MCF 10A (cell line): ENCODE measurements at regions of chr16 and their contacts with region 1.

Region 1: DNA sequence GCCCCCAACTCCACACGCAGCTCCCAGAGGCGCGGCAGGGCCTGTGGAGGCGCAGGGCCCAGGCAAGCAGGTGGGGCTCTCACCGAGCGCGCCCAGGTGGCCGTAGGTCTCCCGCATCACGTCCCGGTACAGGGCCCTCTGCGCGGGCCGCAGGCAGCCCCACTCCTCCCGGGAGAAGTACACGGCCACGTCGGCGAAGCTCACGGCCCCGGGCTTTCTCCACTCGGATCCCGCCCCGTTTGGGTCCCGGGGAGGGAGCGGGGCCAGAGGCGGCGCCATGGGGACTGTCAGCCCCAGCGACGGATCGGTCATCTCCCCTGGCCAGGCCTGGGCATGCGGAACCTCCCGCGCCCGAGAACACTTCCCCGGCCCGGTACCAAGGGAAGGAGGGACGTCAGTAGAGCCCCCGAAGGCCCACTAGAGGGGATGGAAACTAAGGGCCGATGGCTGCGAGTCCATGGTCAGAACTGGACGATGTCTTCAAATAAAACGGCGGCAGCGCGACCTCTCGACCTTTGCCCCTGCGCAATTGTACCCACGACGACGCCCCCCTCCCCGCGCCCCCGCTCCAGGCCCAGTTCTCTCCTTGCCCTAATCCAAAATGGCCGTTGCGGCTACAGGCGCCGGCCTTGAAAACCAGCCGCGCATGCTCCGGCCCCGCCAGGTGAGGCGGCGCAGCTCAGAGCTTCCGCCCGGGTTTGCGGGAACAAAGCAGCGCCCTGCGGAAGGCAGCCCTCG is at the start of gene ZNF747:
- DNase-seq: peak; percentile 86
- H3K4me3 Mint-ChIP-seq: peak within 1 kb of the TSS; percentile 91
- H3K27ac Mint-ChIP-seq: peak within 1 kb of the TSS; percentile 95
- H3K4me1 Mint-ChIP-seq: peaks cover 6% of the 10 kb centered on the region
- H3K27me3 Mint-ChIP-seq: no peaks in the 10 kb centered on the region
- CTCF ChIP-seq: no peak
- total RNA-seq, gene ZNF747: 13.7 TPM in 2 replicates

Region 2: DNA sequence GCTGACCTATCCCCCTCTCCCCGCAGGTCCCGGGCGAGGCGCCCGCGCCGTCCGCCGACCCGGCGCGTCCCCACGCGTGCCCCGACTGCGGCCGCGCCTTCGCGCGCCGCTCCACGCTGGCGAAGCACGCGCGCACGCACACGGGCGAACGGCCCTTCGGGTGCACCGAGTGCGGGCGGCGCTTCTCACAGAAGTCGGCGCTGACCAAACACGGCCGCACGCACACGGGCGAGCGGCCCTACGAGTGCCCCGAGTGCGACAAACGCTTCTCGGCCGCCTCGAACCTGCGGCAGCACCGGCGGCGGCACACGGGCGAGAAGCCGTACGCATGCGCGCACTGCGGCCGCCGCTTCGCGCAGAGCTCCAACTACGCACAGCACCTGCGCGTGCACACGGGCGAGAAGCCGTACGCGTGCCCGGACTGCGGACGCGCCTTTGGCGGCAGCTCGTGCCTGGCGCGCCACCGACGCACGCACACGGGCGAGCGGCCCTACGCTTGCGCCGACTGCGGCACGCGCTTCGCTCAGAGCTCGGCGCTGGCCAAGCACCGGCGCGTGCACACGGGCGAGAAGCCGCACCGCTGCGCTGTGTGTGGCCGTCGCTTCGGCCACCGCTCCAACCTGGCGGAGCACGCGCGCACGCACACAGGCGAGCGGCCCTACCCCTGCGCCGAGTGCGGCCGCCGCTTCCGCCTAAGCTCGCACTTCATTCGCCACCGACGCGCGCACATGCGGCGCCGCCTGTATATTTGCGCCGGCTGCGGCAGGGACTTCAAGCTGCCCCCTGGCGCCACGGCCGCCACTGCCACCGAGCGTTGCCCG is 116.8 kb before region 1 on chr16:
- CTCF ChIA-PET with region 1: no interaction called
- POLR2A ChIA-PET with region 1: interaction called, 12 read pairs
- intact Hi-C with region 1: no loop called
- DNase-seq: peak; percentile 74
- H3K4me3 Mint-ChIP-seq: peak overlapping the region; percentile 58
- H3K27ac Mint-ChIP-seq: no peak overlapping the region
- H3K4me1 Mint-ChIP-seq: peaks cover 4% of the 10 kb centered on the region
- H3K27me3 Mint-ChIP-seq: no peaks in the 10 kb centered on the region
- CTCF ChIP-seq: no peak

Region 3: DNA sequence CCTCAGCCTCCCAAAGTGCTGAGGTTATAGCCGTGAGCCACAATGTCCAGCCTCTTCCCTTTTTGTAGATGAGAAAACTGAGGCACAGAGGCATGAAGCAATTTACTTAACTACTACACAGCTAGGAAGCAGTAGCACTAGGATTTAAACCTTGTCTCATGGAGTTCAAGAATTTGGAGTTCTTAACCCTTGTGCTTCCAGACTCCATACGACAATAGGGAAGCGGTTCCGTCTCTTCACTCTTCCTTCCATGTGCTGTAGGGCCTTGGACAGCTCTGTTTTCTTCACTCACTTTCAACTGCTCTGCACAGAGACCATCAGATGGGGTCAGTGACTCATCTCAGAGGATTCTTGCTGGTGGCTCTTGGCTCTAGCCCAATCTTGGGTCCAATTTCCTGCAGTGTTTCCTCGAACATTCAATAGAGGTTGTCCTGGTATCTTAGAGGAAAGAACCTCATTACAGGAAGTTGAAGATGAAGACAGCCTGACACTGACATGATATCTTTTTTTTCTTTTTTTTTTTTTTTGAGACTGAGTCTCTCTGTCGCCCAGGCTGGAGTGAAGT is 42.7 kb before region 1 on chr16:
- CTCF ChIA-PET with region 1: interaction called, 3 read pairs
- POLR2A ChIA-PET with region 1: interaction called, 11 read pairs
- intact Hi-C with region 1: no loop called
- DNase-seq: peak; percentile 82
- H3K4me3 Mint-ChIP-seq: no peak overlapping the region
- H3K27ac Mint-ChIP-seq: no peak overlapping the region
- H3K4me1 Mint-ChIP-seq: peaks cover 20% of the 10 kb centered on the region
- H3K27me3 Mint-ChIP-seq: no peaks in the 10 kb centered on the region
- CTCF ChIP-seq: no peak

Region 4: DNA sequence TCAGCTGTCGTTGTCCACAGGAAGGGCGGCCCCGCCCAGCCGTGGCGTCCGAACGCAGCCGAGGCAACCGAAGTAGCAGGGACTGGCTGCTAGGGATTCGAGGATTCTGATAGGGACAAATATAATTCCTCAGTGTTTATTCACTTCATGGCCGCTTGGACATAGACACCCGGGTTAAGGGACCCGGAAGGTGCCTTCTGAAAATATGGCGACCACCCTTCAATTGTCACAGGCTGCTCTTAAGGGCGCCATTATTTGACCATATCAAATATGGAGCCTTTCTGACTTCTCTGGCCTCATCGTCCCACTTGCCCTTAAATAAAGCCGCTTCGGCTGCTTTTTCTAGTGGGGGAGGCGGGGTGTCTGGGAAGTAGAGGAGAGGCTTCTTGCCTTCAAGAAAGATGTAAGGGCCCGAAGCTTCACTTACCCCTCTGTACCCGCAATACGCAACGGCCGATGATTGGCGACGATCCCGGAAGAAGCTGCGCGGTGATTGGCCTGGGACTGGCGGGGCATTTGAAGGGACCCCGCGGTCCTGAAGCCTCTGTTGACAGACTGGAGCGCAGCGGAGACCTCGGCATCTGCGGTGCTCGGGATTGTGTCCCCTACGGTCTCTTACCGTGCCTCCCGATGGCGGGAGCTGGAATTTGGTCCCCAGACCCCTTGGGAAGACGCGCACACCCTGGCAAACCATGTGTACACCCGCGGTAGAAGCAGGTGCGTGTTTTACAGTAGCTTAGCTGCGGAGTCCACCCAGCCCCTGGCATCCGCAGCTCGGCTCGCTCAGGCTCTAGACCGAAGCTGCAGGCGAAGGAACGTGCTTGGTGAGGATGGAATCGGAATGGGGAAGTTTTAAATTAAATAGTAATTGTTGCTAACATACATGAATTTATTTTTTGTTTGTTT is 37.4 kb after region 1 on chr16 and contains the start of gene ZNF688:
- CTCF ChIA-PET with region 1: interaction called, 3 read pairs
- POLR2A ChIA-PET with region 1: interaction called, 25 read pairs
- intact Hi-C with region 1: loop called (anchors 1 kb)
- DNase-seq: peak; percentile 97
- H3K4me3 Mint-ChIP-seq: peak within 1 kb of the TSS; percentile 75
- H3K27ac Mint-ChIP-seq: peak within 1 kb of the TSS; percentile 76
- H3K4me1 Mint-ChIP-seq: peaks cover 19% of the 10 kb centered on the region
- H3K27me3 Mint-ChIP-seq: no peaks in the 10 kb centered on the region
- CTCF ChIP-seq: no peak
- total RNA-seq, gene ZNF688: 9.0 and 11.6 TPM in 2 replicates

Region 5: DNA sequence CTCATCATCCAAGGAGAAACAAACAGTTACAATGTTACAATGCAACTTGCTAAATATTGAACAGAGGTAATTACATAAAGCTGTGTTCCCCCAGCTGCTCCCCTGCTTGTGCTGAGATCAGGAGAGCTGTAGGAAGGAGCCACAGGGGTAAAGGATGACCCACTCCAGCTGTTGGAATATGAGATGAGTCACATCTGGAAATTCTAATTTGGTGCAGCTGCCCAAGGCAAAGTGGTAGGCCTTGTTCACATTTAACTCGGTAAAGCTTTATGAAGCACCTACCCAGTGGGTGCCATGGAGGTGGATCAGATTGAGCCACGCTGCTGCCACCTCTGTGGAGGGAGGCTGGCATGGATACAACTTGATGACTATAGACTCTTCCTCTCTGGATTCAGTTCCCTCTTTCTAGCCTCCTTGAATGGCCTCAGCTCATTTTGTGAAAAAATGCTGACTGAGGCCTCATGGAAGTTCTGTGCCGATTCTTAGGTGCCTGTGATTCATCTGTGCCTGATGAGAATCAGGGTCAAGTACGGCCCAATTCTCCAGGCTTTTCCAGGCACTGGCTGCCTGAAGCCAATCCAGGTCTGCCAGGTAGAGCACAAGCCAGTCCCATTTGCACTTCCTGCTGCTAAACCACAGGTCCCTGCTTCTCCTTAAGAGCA is 68.2 kb after region 1 on chr16:
- CTCF ChIA-PET with region 1: interaction called, 3 read pairs
- POLR2A ChIA-PET with region 1: interaction called, 4 read pairs
- intact Hi-C with region 1: loop called (anchors 2 kb)
- DNase-seq: no peak
- H3K4me3 Mint-ChIP-seq: no peak overlapping the region
- H3K27ac Mint-ChIP-seq: no peak overlapping the region
- H3K4me1 Mint-ChIP-seq: no peaks in the 10 kb centered on the region
- H3K27me3 Mint-ChIP-seq: no peaks in the 10 kb centered on the region
- CTCF ChIP-seq: no peak

Region 6: GRCh38 chr16:30657866-30658730 is 123.6 kb after region 1 on chr16 and contains the start of gene FBRS:
- CTCF ChIA-PET with region 1: no interaction called
- POLR2A ChIA-PET with region 1: interaction called, 13 read pairs
- intact Hi-C with region 1: no loop called
- DNase-seq: peak; percentile 100
- H3K4me3 Mint-ChIP-seq: peak within 1 kb of the TSS; percentile 93
- H3K27ac Mint-ChIP-seq: peak within 1 kb of the TSS; percentile 100
- H3K4me1 Mint-ChIP-seq: peaks cover 21% of the 10 kb centered on the region
- H3K27me3 Mint-ChIP-seq: no peaks in the 10 kb centered on the region
- CTCF ChIP-seq: peak; percentile 57
- total RNA-seq, gene FBRS: 69.1 and 80.8 TPM in 2 replicates